Activated CD8-positive, alpha-beta T cell treated with anti-CD3 and anti-CD28 coated beads, Interleukin-2, amount 10 ng/mL, durations not matched to agents 7 days and 5 days (primary cell): ENCODE measurements at regions of chr20 and their contacts with region 1.

Region 1: GRCh38 chr20:330233-331149 is 5.1 kb downstream of the SOX12 start:
- DNase-seq: peak; percentile 75
- ATAC-seq: peak; percentile 59
- H3K4me3 Mint-ChIP-seq: no peak overlapping the region
- H3K27ac Mint-ChIP-seq: no peak overlapping the region
- H3K4me1 Mint-ChIP-seq: peaks cover 37% of the 10 kb centered on the region
- H3K27me3 Mint-ChIP-seq: no peaks in the 10 kb centered on the region

Region 2: GRCh38 chr20:208942-209566 is 121.4 kb before region 1 on chr20:
- CTCF ChIA-PET with region 1: interaction called, 11 read pairs
- POLR2A ChIA-PET with region 1: no interaction called
- DNase-seq: peak; percentile 34
- ATAC-seq: peak; percentile 82
- H3K4me3 Mint-ChIP-seq: no peak overlapping the region
- H3K27ac Mint-ChIP-seq: no peak overlapping the region
- H3K4me1 Mint-ChIP-seq: no peaks in the 10 kb centered on the region
- H3K27me3 Mint-ChIP-seq: peaks cover 14% of the 10 kb centered on the region

Region 3: GRCh38 chr20:290084-290831 is 40.2 kb before region 1 on chr20 and contains the start of gene C20orf96:
- CTCF ChIA-PET with region 1: interaction called, 12 read pairs
- POLR2A ChIA-PET with region 1: no interaction called
- DNase-seq: peak; percentile 93
- ATAC-seq: peak; percentile 96
- H3K4me3 Mint-ChIP-seq: no peak within 1 kb of the TSS
- H3K27ac Mint-ChIP-seq: no peak within 1 kb of the TSS
- H3K4me1 Mint-ChIP-seq: peaks cover 17% of the 10 kb centered on the region
- H3K27me3 Mint-ChIP-seq: no peaks in the 10 kb centered on the region
- total RNA-seq, gene C20orf96: 6.8 to 8.5 TPM

Region 4: DNA sequence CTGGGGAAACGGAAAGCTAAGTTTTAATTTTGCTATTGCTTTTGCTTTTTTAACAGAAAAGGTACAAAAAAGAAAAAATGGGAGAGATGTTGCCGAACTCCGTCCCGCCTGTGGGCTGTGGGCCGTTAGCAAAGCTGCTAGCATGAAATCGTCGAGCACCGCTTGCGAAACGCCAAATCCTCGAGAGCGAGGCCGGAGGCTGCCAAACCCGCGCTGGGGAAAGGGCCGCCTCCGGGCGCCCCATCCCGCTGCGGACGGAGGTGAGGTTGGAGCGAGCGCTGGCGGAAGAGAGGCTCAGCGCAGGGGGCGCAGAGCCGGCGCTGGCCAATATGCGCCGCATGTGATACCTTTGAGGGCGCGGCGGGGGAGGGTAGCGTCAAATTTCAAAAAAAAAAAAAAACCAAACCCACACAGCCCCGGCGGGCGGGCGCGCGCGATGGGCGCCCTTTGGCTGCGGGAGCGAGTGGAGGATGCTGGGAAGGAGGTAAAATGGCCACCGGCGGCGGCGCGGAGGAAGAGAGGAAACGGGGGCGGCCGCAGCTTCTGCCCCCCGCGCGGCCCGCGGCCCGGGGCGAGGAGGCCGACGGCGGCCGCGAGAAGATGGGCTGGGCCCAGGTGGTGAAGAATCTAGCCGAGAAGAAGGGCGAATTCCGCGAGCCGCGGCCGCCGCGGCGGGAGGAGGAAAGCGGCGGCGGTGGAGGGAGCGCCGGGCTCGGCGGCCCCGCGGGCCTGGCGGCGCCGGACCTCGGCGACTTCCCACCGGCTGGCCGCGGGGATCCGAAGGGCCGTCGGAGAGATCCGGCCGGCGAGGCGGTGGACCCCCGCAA is 33.2 kb before region 1 on chr20 and contains the start of gene ZCCHC3:
- CTCF ChIA-PET with region 1: interaction called, 19 read pairs
- POLR2A ChIA-PET with region 1: interaction called, 49 read pairs
- DNase-seq: peak; percentile 89
- ATAC-seq: peak; percentile 87
- H3K4me3 Mint-ChIP-seq: peak within 1 kb of the TSS; percentile 99
- H3K27ac Mint-ChIP-seq: peak within 1 kb of the TSS; percentile 99
- H3K4me1 Mint-ChIP-seq: peaks cover 54% of the 10 kb centered on the region
- H3K27me3 Mint-ChIP-seq: no peaks in the 10 kb centered on the region
- total RNA-seq, gene ZCCHC3: 28.4 to 29.0 TPM

Region 5: DNA sequence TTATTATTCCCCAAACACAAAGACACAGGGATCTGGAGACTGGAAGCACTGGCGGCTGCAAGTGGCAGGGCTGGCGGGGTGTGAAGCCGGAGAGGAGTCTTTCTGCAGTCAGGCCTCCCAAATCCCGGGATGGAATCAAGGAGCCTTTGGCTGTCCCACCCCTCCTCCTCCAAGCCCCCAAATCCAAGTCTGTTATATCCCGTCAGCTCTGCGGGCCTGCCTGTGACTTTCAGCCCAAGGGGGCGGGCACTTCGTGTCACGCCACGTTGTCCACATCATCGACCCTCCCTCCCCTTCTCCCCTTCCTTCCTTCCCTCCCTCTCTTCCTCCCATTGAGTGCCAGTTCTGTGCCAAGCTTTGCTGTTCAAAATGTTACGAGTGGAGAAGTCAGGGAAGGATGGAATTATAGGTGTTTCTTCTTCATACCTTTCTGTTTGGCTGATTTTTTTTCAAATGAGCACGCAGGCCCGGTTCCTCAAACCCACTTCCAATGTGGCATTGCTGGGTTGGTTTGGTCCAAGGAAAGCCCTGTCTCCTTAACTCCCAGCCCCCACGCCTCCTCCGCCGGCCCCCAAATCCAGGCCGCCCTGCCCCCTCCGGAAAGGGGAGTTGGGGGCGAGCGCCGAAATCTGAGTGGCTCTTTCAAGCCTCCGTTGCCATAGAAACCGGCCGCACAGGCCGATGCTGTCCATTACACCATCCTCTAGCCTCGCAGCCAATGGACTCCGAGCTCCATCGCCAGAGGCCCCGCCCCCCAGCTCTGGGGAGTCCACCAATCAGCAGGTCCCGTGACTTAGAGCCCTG is 20.4 kb before region 1 on chr20:
- CTCF ChIA-PET with region 1: interaction called, 10 read pairs
- POLR2A ChIA-PET with region 1: interaction called, 4 read pairs
- DNase-seq: peak; percentile 88
- ATAC-seq: peak; percentile 100
- H3K4me3 Mint-ChIP-seq: peak overlapping the region; percentile 66
- H3K27ac Mint-ChIP-seq: peak overlapping the region; percentile 67
- H3K4me1 Mint-ChIP-seq: peaks cover 13% of the 10 kb centered on the region
- H3K27me3 Mint-ChIP-seq: no peaks in the 10 kb centered on the region

Region 6: DNA sequence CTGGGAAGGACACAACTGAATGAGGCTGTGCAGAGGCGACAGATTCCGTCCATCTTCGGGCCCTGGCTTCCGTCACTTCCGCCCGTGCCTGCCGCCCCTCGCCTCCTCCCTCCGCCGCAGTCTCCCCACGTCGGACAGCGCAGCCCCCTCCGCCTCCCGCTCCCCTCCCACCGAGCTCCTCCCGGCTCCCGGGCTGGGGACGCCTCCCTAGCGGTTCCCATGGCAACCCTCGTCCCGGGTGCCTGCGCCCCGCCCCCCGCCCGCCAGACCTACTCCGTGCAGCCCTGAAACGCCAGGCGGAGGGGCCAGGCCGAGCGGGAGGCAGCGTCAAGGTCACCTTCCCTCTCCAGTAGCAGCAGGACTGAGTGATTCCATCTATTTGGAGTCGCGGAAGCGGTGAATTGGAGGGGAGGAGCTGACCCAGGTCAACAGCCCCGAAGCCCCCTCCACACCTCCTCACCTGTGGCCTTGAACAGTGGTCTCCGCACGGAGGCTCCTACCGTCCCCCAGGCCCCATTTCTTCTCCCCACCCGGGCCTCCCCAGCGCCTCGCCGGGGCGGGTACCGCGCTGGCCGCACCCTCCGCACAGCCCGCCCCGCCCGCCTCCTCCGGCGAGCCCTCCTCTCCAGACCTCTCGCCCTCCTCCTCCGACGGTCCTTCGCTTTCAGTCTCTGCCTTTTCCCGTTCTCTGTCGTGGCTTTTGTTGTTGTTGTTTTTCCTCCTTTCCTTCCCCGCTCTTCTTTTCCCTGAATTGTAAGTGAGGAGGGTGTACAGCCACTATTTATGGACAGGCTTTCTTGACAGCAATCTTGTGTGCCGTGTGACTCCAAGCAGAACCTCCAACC is 17.4 kb after region 1 on chr20:
- CTCF ChIA-PET with region 1: interaction called, 26 read pairs
- POLR2A ChIA-PET with region 1: no interaction called
- DNase-seq: peak; percentile 76
- ATAC-seq: peak; percentile 92
- H3K4me3 Mint-ChIP-seq: peak overlapping the region; percentile 81
- H3K27ac Mint-ChIP-seq: peak overlapping the region; percentile 77
- H3K4me1 Mint-ChIP-seq: peaks cover 35% of the 10 kb centered on the region
- H3K27me3 Mint-ChIP-seq: peaks cover 6% of the 10 kb centered on the region